ENCODE measurements at regions of chr10 and their contacts with region 1.

Region 1: DNA sequence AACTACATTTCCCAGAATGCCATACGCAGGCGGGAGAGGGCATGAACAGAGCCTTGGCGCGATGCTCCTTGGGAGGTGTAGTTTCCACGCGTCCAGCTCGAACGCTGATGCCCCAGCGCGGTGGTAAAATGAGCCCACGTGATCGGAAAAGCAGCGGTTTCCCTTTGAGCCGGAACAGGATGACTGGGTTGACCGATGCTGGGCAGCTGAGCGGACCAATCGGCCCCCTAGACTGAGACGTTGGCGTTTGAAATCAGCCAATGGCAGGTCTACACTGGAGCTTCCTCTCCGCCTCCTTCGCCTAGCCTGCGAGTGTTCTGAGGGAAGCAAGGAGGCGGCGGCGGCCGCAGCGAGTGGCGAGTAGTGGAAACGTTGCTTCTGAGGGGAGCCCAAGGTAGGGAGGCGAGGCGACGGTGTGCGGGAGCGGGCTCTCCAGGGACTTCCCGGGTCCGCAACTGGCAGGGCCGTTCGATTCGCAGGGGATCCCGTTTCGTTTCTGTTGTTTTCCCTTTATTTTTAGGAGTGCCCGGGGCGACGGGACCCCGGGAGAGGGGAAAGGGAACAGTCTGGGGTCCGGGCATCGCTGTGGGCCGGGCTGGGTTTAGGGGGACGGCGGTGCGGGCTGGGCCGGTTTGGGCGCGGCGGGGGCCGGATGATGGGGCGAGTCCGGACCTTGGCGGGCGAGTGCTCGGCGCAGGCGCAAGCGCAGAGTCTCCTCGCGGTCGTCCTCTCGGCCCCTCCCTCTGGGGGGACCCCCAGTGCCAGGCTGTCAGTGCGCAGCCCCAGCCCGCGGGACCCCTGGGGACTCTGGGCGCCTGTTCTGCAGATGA is at the start of gene BUB3:
- DNase-seq: peak; percentile 93 to 96 (median 95)
- H3K4me3 ChIP-seq: peak within 1 kb of the TSS; percentile 68 to 94
- H3K4me3 Mint-ChIP-seq: peak within 1 kb of the TSS; percentile 100
- H3K27ac ChIP-seq: peak within 1 kb of the TSS; percentile 79
- H3K27ac Mint-ChIP-seq: peak within 1 kb of the TSS; percentile 94 to 99 (median 99)
- H3K4me1 ChIP-seq: peaks cover 73% of the 10 kb centered on the region
- H3K4me1 Mint-ChIP-seq: peaks cover 44 to 84% (median 64%) of the 10 kb centered on the region in 4 donors
- H3K27me3 ChIP-seq: peaks cover 10% of the 10 kb centered on the region
- H3K27me3 Mint-ChIP-seq: peaks cover 9 to 14% of the 10 kb centered on the region in 2 donors
- total RNA-seq, gene BUB3: 162 to 169 TPM

Region 2: DNA sequence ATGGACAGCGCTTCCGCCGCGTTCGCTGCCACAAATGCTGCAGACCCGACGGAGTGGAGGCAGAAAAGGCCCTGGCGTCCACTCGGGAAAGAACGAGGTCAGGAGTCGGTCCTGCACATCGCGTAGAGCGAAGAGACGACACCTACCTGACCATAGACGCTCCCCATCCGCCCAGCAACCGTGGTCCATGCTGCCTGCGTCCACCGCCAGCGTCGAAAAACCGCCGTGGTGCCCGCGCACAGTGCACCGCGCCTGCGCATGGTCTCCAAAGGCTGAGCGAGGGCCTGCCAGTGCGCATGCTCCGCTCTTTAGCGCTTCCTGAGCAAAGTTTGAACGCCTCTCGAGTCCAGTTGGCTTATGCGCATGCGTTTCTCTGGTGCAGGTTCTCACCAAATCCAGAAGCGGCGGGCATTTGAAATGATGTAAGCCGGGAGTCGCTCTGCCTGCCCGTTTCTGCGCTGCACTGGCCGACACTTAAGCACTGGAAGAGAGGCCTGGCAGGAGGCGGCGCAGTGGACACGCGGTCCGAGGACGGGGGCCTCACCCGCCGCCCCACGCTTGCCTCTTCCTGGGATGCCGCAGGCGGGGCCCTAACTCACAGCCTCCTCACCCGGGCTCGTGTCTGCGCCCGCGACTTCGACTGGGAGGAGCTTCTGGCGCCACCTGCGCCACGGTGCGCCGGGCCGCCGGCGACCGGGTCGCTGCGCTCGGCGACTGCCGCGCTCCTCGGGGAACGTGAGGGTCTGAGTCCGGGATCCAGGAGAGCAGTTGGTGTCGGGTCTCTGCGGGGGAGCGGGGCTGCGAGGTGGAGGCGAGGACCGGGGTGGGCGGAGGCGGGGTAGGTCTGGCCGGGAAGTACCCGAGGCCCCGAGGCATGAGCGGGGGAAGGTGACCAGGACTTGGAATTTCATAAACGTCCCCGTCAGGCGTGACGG is 274.7 kb before region 1 on chr10 and contains the start of gene FAM24B:
- CTCF ChIA-PET with region 1: interaction called, 3 read pairs
- POLR2A ChIA-PET with region 1: interaction called, 3 read pairs
- intact Hi-C with region 1: loop called (anchors 5 kb)
- DNase-seq: peak; percentile 90 to 96 (median 96)
- H3K4me3 ChIP-seq: peak within 1 kb of the TSS; percentile 47 to 79
- H3K4me3 Mint-ChIP-seq: peak within 1 kb of the TSS; percentile 91 to 95 (median 92)
- H3K27ac ChIP-seq: peak within 1 kb of the TSS; percentile 68
- H3K27ac Mint-ChIP-seq: peak within 1 kb of the TSS; percentile 79 to 97 (median 95)
- H3K4me1 ChIP-seq: peaks cover 41% of the 10 kb centered on the region
- H3K4me1 Mint-ChIP-seq: peaks cover 31 to 55% (median 43%) of the 10 kb centered on the region in 4 donors
- H3K27me3 ChIP-seq: no peaks in the 10 kb centered on the region
- H3K27me3 Mint-ChIP-seq: no peaks in the 10 kb centered on the region
- total RNA-seq, gene FAM24B: 10.8 to 12.8 TPM

Region 3: GRCh38 chr10:122980209-122981065 is 173.9 kb before region 1 on chr10 and contains the start of gene PSTK:
- CTCF ChIA-PET with region 1: interaction called, 3 read pairs
- POLR2A ChIA-PET with region 1: interaction called, 6 read pairs
- intact Hi-C with region 1: loop called (anchors 1 kb)
- DNase-seq: peak; percentile 90 to 94 (median 91)
- H3K4me3 ChIP-seq: peak within 1 kb of the TSS; percentile 19 to 88
- H3K4me3 Mint-ChIP-seq: peak within 1 kb of the TSS; percentile 90 to 94 (median 92)
- H3K27ac ChIP-seq: peak within 1 kb of the TSS; percentile 79
- H3K27ac Mint-ChIP-seq: peak within 1 kb of the TSS; percentile 96 to 98 (median 97)
- H3K4me1 ChIP-seq: peaks cover 13% of the 10 kb centered on the region
- H3K4me1 Mint-ChIP-seq: peaks cover 9 to 24% (median 15%) of the 10 kb centered on the region in 4 donors
- H3K27me3 ChIP-seq: no peaks in the 10 kb centered on the region
- H3K27me3 Mint-ChIP-seq: peaks cover 0 to 1% of the 10 kb centered on the region in 2 donors
- total RNA-seq, gene PSTK: 3.9 to 4.7 TPM

Region 4: DNA sequence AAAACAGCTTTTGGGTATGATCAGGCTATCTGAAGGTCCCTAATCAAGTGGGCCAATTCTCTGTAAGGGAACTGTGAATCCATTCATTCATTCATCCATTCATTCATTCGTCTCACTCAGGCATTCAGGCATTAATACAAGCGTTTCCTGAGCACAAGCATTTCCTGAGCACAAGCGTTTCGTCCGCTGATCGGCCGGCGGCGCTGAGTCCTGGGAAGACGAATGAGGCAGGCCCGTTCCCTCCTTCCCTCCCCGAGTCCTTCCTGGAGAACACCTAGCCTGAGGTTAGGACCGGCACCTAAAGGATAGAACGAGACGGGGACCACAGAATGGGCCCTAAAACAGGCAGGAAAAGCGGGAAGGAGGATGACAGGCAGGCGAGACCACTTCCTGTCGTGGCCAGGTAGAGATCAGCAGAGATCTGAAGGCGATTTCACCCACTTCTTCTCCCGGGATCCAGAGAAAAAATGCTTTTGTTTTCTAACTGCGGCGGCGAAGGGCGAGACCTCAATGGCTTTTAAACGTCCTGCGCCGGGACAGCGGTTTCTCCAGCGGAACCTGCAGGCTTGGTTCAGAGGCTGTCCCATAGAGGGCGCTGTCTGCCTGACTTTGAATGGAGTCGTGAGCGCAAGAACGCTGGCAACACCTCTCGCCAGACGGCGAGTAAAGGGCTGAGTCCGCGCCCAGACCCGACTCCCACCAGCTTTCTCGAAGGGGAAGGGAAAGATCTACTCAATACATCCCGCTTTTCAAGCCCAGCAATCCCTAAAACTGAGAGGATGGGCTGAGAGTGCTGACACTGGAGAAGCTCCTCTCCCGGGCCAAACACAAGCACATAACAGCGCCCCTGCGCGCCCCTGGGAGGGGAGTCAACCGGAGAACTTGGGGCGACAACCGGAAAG is 21.5 kb before region 1 on chr10:
- CTCF ChIA-PET with region 1: interaction called, 16 read pairs
- POLR2A ChIA-PET with region 1: no interaction called
- intact Hi-C with region 1: loop called (anchors 2 kb)
- DNase-seq: peak; percentile 78 to 82 (median 79)
- H3K4me3 ChIP-seq: no peak overlapping the region
- H3K4me3 Mint-ChIP-seq: peak overlapping the region; percentile 36 to 92 (median 79)
- H3K27ac ChIP-seq: no peak overlapping the region
- H3K27ac Mint-ChIP-seq: peak overlapping the region in 6 of 7 donors; percentile 26 to 92 (median 72)
- H3K4me1 ChIP-seq: peaks cover 46% of the 10 kb centered on the region
- H3K4me1 Mint-ChIP-seq: peaks cover 14 to 43% (median 29%) of the 10 kb centered on the region in 4 donors
- H3K27me3 ChIP-seq: peaks cover 35% of the 10 kb centered on the region
- H3K27me3 Mint-ChIP-seq: peaks cover 51 to 60% of the 10 kb centered on the region in 2 donors

Region 5: DNA sequence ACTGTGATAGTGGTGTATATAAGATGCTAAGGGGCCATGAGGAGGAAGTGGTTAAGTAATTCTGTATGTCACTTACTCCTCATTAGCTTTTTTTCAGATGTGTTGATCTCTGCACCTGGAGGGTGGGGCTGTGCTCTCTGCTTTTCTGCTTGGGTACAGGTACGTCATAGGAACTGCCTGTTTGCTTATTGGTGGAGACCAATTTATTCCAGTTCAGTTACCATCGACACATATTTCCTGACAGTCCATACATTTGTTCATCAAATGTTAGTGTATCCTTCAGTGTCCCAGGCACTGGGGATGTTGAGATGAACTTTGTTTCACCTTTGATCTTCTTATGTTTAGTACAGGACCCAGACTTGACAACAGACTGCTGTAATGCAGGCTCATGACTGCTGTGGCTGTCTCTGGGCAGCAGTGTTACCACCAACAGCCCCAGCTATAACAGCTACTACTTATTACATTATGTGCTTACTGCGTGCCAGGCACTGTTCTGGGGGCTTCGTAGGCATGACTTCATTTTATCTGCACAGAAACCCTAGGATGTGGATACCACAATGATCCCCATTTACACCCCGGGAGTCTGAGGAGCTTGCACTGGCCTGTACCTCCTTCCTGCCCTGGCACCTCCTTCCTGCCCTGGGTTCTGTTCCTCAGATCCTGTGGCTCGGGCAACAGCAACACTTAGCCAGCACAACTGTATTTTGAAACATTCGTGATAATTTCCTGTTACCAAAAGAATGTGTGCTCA is 87.3 kb after region 1 on chr10:
- CTCF ChIA-PET with region 1: interaction called, 6 read pairs
- POLR2A ChIA-PET with region 1: interaction called, 48 read pairs
- intact Hi-C with region 1: loop called (anchors 1 kb)
- DNase-seq: peak; percentile 81 to 88 (median 85)
- H3K4me3 ChIP-seq: peak overlapping the region in 1 of 2 donors; percentile 39
- H3K4me3 Mint-ChIP-seq: peak overlapping the region; percentile 8 to 85 (median 71)
- H3K27ac ChIP-seq: peak overlapping the region; percentile 76
- H3K27ac Mint-ChIP-seq: peak overlapping the region; percentile 82 to 99 (median 97)
- H3K4me1 ChIP-seq: peaks cover 32% of the 10 kb centered on the region
- H3K4me1 Mint-ChIP-seq: peaks cover 21 to 39% (median 28%) of the 10 kb centered on the region in 4 donors
- H3K27me3 ChIP-seq: no peaks in the 10 kb centered on the region
- H3K27me3 Mint-ChIP-seq: no peaks in the 10 kb centered on the region

Region 6: GRCh38 chr10:124791378-124792348 is 1637.4 kb after region 1 on chr10 and contains the start of gene EEF1AKMT2:
- CTCF ChIA-PET with region 1: no interaction called
- POLR2A ChIA-PET with region 1: no interaction called
- intact Hi-C with region 1: loop called (anchors 10 kb)
- DNase-seq: peak; percentile 78 to 87 (median 85)
- H3K4me3 ChIP-seq: peak within 1 kb of the TSS; percentile 97 to 99
- H3K4me3 Mint-ChIP-seq: peak within 1 kb of the TSS; percentile 92 to 99 (median 98)
- H3K27ac ChIP-seq: peak within 1 kb of the TSS; percentile 76
- H3K27ac Mint-ChIP-seq: peak within 1 kb of the TSS; percentile 78 to 97 (median 93)
- H3K4me1 ChIP-seq: peaks cover 16% of the 10 kb centered on the region
- H3K4me1 Mint-ChIP-seq: peaks cover 5 to 28% (median 17%) of the 10 kb centered on the region in 4 donors
- H3K27me3 ChIP-seq: no peaks in the 10 kb centered on the region
- H3K27me3 Mint-ChIP-seq: no peaks in the 10 kb centered on the region
- total RNA-seq, gene EEF1AKMT2: 20.0 to 24.2 TPM

Measured in CD4-positive, alpha-beta memory T cell (primary cell).